ENCODE measurements at regions of chr1 and their contacts with region 1.

Region 1: GRCh38 chr1:226046240-226046639 is 16.3 kb upstream of the H3-3A start:
- DNase-seq: no peak
- ATAC-seq: no peak
- H3K4me3 ChIP-seq: no peak overlapping the region
- H3K4me3 Mint-ChIP-seq: no peak overlapping the region
- H3K27ac ChIP-seq: no peak overlapping the region
- H3K27ac Mint-ChIP-seq: no peak overlapping the region
- H3K4me1 ChIP-seq: no peaks in the 10 kb centered on the region
- H3K4me1 Mint-ChIP-seq: peaks cover 2% of the 10 kb centered on the region
- H3K27me3 ChIP-seq: no peaks in the 10 kb centered on the region
- H3K27me3 Mint-ChIP-seq: no peaks in the 10 kb centered on the region
- CTCF ChIP-seq: no peak

Region 2: GRCh38 chr1:226034482-226034881 is 11.8 kb before region 1 on chr1:
- CTCF ChIA-PET with region 1: no interaction called
- POLR2A ChIA-PET with region 1: interaction called, 14 read pairs
- intact Hi-C with region 1: no loop called
- DNase-seq: peak; percentile 35
- ATAC-seq: peak; percentile 51
- H3K4me3 ChIP-seq: no peak overlapping the region
- H3K4me3 Mint-ChIP-seq: no peak overlapping the region
- H3K27ac ChIP-seq: no peak overlapping the region
- H3K27ac Mint-ChIP-seq: no peak overlapping the region
- H3K4me1 ChIP-seq: peaks cover 21 to 28% of the 10 kb centered on the region in 2 donors
- H3K4me1 Mint-ChIP-seq: peaks cover 29% of the 10 kb centered on the region
- H3K27me3 ChIP-seq: no peaks in the 10 kb centered on the region
- H3K27me3 Mint-ChIP-seq: no peaks in the 10 kb centered on the region
- CTCF ChIP-seq: no peak

Measured in B cell (primary cell).